ENCODE measurements at regions of chrX and their contacts with region 1.

Region 1: DNA sequence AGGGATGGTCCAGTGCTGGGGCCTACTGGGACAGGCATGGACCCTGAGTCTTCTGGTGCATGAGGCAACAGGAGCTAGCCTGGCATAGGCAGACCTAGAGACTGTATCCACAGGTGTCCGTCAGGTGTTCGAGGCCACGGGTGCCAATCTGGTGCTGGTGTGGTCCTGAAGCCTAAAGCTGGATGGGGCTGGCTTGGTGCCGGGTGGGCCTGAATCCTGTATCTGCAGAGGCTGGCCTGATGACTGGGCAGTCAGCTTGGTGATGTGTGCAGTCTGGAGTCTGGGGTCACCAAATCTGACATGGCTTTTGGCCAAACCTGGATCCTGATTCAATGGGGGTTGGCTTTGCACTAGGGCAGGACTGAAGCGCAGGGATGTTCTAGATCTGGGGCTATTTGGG is 269.8 kb upstream of the GRIA3 start:
- DNase-seq: no peak
- ATAC-seq: no peak
- H3K4me3 ChIP-seq: no peak overlapping the region
- H3K27ac ChIP-seq: no peak overlapping the region
- H3K4me1 ChIP-seq: no peaks in the 10 kb centered on the region
- H3K27me3 ChIP-seq: no peaks in the 10 kb centered on the region
- CTCF ChIP-seq: no peak

Region 2: DNA sequence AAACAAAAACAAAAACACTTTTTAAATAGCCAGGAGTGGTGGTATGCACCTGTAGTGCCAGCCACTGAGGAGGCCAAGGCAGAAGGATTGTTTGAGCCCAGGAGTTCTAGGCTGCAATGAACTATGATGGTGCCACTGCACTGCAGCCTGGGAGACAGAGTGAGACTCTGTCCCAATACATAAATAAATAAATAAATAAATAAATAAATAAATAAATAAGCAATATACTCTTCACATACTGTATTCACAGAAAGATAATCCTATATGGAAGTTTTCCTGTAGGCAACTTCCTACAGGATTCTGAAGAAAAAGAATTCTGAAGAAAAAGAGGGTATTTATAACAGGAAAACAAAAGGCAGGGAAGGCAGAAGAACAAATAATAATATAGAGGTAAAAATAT is 23.5 kb before region 1 on chrX:
- CTCF ChIA-PET with region 1: interaction called, 10 read pairs
- POLR2A ChIA-PET with region 1: no interaction called
- in situ Hi-C with region 1: no loop called
- intact Hi-C with region 1: no loop called
- DNase-seq: no peak
- ATAC-seq: no peak
- H3K4me3 ChIP-seq: no peak overlapping the region
- H3K27ac ChIP-seq: no peak overlapping the region
- H3K4me1 ChIP-seq: no peaks in the 10 kb centered on the region
- H3K27me3 ChIP-seq: no peaks in the 10 kb centered on the region
- CTCF ChIP-seq: no peak